ENCODE measurements at regions of chr20 and their contacts with region 1.

Region 1: GRCh38 chr20:47487175-47487917 is 14.3 kb upstream of the NCOA3 start:
- DNase-seq: peak; percentile 77
- H3K4me3 Mint-ChIP-seq: peak overlapping the region; percentile 30
- H3K27ac Mint-ChIP-seq: peak overlapping the region; percentile 97
- H3K4me1 Mint-ChIP-seq: peaks cover 55% of the 10 kb centered on the region
- H3K27me3 Mint-ChIP-seq: no peaks in the 10 kb centered on the region

Region 2: DNA sequence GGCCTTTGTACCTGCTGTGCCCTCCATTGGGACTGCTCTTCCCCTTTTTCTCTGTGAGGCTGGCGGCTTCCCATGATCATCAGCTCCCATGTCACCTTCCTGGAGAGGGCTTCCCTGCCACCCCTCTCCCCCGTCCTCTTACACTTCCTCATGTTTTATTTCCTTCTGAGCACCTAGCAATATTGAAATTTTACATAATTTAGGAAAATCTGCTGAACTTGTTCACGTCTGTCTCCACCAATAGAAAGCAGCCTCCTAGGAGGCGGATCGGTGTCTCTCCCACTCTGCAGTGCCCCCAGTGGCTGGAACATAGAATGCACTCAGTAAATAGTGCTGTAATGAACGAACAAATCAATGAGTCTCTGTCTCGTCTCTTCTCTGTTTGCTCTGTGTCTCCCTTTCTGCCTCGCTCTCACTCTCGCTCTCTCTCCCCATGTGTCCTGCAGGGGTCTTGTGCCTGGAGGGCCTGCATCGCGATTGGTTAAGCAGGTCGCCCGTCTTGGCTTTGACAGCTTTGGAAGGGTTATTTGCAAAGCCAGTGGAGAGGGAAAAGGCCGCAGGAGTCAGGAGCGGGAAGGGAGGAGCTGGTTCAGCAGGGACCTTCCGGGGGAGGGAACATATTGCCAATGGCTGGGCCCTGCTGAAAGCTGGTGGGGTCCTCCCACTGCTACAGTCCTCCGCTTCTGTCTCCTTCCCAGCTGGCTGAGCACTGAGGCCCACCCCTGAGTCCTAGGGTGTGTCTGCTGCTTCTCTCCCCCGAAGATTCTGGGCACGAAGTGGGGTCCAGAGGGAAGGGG is 924.8 kb before region 1 on chr20:
- CTCF ChIA-PET with region 1: no interaction called
- POLR2A ChIA-PET with region 1: no interaction called
- intact Hi-C with region 1: loop called (anchors 10 kb)
- DNase-seq: peak; percentile 75
- H3K4me3 Mint-ChIP-seq: no peak overlapping the region
- H3K27ac Mint-ChIP-seq: no peak overlapping the region
- H3K4me1 Mint-ChIP-seq: peaks cover 21% of the 10 kb centered on the region
- H3K27me3 Mint-ChIP-seq: peaks cover 6% of the 10 kb centered on the region

Region 3: GRCh38 chr20:47411161-47411560 is 76.2 kb before region 1 on chr20:
- CTCF ChIA-PET with region 1: no interaction called
- POLR2A ChIA-PET with region 1: no interaction called
- intact Hi-C with region 1: loop called (anchors 2 kb)
- DNase-seq: no peak
- H3K4me3 Mint-ChIP-seq: peak overlapping the region; percentile 13
- H3K27ac Mint-ChIP-seq: no peak overlapping the region
- H3K4me1 Mint-ChIP-seq: peaks cover 31% of the 10 kb centered on the region
- H3K27me3 Mint-ChIP-seq: no peaks in the 10 kb centered on the region

Region 4: GRCh38 chr20:47453142-47453782 is 34.1 kb before region 1 on chr20:
- CTCF ChIA-PET with region 1: interaction called, 16 read pairs
- POLR2A ChIA-PET with region 1: interaction called, 23 read pairs
- intact Hi-C with region 1: loop called (anchors 1 kb)
- DNase-seq: peak; percentile 77
- H3K4me3 Mint-ChIP-seq: no peak overlapping the region
- H3K27ac Mint-ChIP-seq: peak overlapping the region; percentile 74
- H3K4me1 Mint-ChIP-seq: peaks cover 35% of the 10 kb centered on the region
- H3K27me3 Mint-ChIP-seq: no peaks in the 10 kb centered on the region

Region 5: GRCh38 chr20:47501483-47502270 is 14.3 kb after region 1 on chr20 and contains the start of gene NCOA3:
- CTCF ChIA-PET with region 1: interaction called, 18 read pairs
- POLR2A ChIA-PET with region 1: interaction called, 70 read pairs
- intact Hi-C with region 1: loop called (anchors 1 kb)
- DNase-seq: peak; percentile 96
- H3K4me3 Mint-ChIP-seq: peak within 1 kb of the TSS; percentile 92
- H3K27ac Mint-ChIP-seq: peak within 1 kb of the TSS; percentile 89
- H3K4me1 Mint-ChIP-seq: peaks cover 54% of the 10 kb centered on the region
- H3K27me3 Mint-ChIP-seq: no peaks in the 10 kb centered on the region
- total RNA-seq, gene NCOA3: 72.0 to 81.8 TPM

Region 6: GRCh38 chr20:47515843-47516242 is 28.5 kb after region 1 on chr20:
- CTCF ChIA-PET with region 1: no interaction called
- POLR2A ChIA-PET with region 1: interaction called, 4 read pairs
- intact Hi-C with region 1: loop called (anchors 2 kb)
- DNase-seq: no peak
- H3K4me3 Mint-ChIP-seq: no peak overlapping the region
- H3K27ac Mint-ChIP-seq: peak overlapping the region; percentile 86
- H3K4me1 Mint-ChIP-seq: peaks cover 57% of the 10 kb centered on the region
- H3K27me3 Mint-ChIP-seq: no peaks in the 10 kb centered on the region

Region 7: GRCh38 chr20:47546184-47547033 is 59.1 kb after region 1 on chr20:
- CTCF ChIA-PET with region 1: no interaction called
- POLR2A ChIA-PET with region 1: no interaction called
- intact Hi-C with region 1: no loop called
- DNase-seq: no peak
- H3K4me3 Mint-ChIP-seq: no peak overlapping the region
- H3K27ac Mint-ChIP-seq: peak overlapping the region; percentile 19
- H3K4me1 Mint-ChIP-seq: peaks cover 60% of the 10 kb centered on the region
- H3K27me3 Mint-ChIP-seq: no peaks in the 10 kb centered on the region

Region 8: GRCh38 chr20:47610247-47610944 is 123.0 kb after region 1 on chr20:
- CTCF ChIA-PET with region 1: interaction called, 3 read pairs
- POLR2A ChIA-PET with region 1: interaction called, 8 read pairs
- intact Hi-C with region 1: loop called (anchors 1 kb)
- DNase-seq: peak; percentile 91
- H3K4me3 Mint-ChIP-seq: peak overlapping the region; percentile 67
- H3K27ac Mint-ChIP-seq: peak overlapping the region; percentile 90
- H3K4me1 Mint-ChIP-seq: peaks cover 86% of the 10 kb centered on the region
- H3K27me3 Mint-ChIP-seq: no peaks in the 10 kb centered on the region